Activated naive CD4-positive, alpha-beta T cell treated with anti-CD3 and anti-CD28 coated beads, Interleukin-2, amount 10 ng/mL, durations not matched to agents 7 days and 5 days (primary cell): ENCODE measurements at regions of chr2 and their contacts with region 1.

Region 1: DNA sequence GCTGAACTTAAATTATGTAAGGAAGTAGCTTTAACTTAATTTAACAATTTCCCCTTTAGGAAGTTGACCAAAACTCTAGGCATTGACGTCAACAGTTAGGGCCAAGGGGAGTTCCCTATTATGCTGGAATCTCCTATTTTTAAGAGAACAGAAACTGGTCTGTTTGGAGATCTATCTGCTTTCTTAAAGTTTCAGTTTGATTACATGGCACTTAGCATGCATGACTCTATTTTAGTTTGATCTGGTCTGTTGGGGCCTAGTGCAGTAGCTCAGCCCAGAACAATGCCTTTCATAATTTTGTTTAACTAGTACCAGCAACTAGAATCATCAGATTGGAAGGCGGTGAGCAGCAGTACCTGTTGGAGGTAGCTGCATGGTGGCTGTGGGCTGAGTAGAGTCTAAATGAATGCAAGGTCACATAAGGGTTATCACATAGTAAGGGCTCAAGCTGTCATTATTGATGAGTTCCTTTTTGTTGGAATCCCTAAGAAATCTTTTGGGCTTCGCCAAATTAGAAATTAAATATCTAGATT is 60.5 kb upstream of the ZNG1B start:
- DNase-seq: no peak
- H3K4me3 Mint-ChIP-seq: no peak overlapping the region
- H3K27ac Mint-ChIP-seq: no peak overlapping the region
- H3K4me1 Mint-ChIP-seq: peaks cover 4% of the 10 kb centered on the region
- H3K27me3 Mint-ChIP-seq: peaks cover 18% of the 10 kb centered on the region

Region 2: GRCh38 chr2:113390124-113390849 is 13.3 kb after region 1 on chr2:
- CTCF ChIA-PET with region 1: interaction called, 10 read pairs
- DNase-seq: peak; percentile 63
- H3K4me3 Mint-ChIP-seq: peak overlapping the region; percentile 53
- H3K27ac Mint-ChIP-seq: peak overlapping the region; percentile 78
- H3K4me1 Mint-ChIP-seq: peaks cover 15% of the 10 kb centered on the region
- H3K27me3 Mint-ChIP-seq: peaks cover 23% of the 10 kb centered on the region

Region 3: DNA sequence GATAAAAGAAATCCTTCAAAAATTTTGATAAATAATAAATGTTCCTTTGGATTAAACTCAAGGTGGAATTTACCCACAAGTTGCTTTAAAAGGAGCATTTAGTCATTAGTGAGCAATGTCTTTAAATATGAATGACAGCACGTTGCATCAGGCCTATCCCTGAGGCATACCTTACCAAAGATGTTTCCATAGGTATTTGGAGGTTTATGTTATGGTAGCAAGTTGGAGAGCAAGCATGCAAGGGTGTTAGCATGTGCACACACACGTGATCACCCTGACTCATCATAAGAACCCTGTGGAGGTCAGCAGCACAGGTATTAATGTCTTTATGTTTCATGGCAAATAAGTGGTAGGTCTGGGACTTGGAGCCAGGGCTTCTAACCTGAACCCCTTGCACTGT is 672.8 kb after region 1 on chr2:
- CTCF ChIA-PET with region 1: no interaction called
- DNase-seq: no peak
- H3K4me3 Mint-ChIP-seq: no peak overlapping the region
- H3K27ac Mint-ChIP-seq: no peak overlapping the region
- H3K4me1 Mint-ChIP-seq: no peaks in the 10 kb centered on the region
- H3K27me3 Mint-ChIP-seq: peaks cover 8% of the 10 kb centered on the region